ENCODE measurements at regions of chr17 and their contacts with region 1.

Region 1: GRCh38 chr17:4966844-4967538 is 626 bp downstream of the SPAG7 start:
- DNase-seq: peak; percentile 100
- ATAC-seq: peak; percentile 85
- H3K4me3 ChIP-seq: peak overlapping the region; percentile 58
- H3K27ac ChIP-seq: peak overlapping the region; percentile 87
- H3K4me1 ChIP-seq: peaks cover 14% of the 10 kb centered on the region
- H3K27me3 ChIP-seq: no peaks in the 10 kb centered on the region
- CTCF ChIP-seq: no peak
- POLR2A ChIP-seq: no peak
- RAD21 ChIP-seq: no peak

Region 2: GRCh38 chr17:4939796-4940624 is 27.0 kb before region 1 on chr17 and contains the starts of genes RNF167 and SLC25A11:
- CTCF ChIA-PET with region 1: interaction called, 3 read pairs
- POLR2A ChIA-PET with region 1: interaction called, 14 read pairs
- dilution Hi-C with region 1: no loop called
- in situ Hi-C with region 1: no loop called
- intact Hi-C with region 1: no loop called
- DNase-seq: peak; percentile 100
- ATAC-seq: peak; percentile 89
- H3K4me3 ChIP-seq: peak within 1 kb of the TSS; percentile 68
- H3K27ac ChIP-seq: peak within 1 kb of the TSS; percentile 78
- H3K4me1 ChIP-seq: peaks cover 13% of the 10 kb centered on the region
- H3K27me3 ChIP-seq: no peaks in the 10 kb centered on the region
- CTCF ChIP-seq: no peak
- POLR2A ChIP-seq: peak; percentile 71
- RAD21 ChIP-seq: no peak
- total RNA-seq, gene RNF167: 13.1 and 13.3 TPM in 2 replicates
- total RNA-seq, gene SLC25A11: 30.8 and 35.0 TPM in 2 replicates

Region 3: GRCh38 chr17:4986951-4987766 is 20.2 kb after region 1 on chr17 and contains the start of gene CAMTA2:
- CTCF ChIA-PET with region 1: interaction called, 11 read pairs
- POLR2A ChIA-PET with region 1: no interaction called
- dilution Hi-C with region 1: no loop called
- in situ Hi-C with region 1: no loop called
- intact Hi-C with region 1: no loop called
- DNase-seq: peak; percentile 56
- ATAC-seq: peak; percentile 94
- H3K4me3 ChIP-seq: peak within 1 kb of the TSS; percentile 72
- H3K27ac ChIP-seq: peak within 1 kb of the TSS; percentile 72
- H3K4me1 ChIP-seq: peaks cover 7% of the 10 kb centered on the region
- H3K27me3 ChIP-seq: no peaks in the 10 kb centered on the region
- CTCF ChIP-seq: peak; percentile 71
- POLR2A ChIP-seq: no peak
- RAD21 ChIP-seq: peak; percentile 46
- total RNA-seq, gene CAMTA2: 1.4 TPM in 2 replicates

Measured in IMR-90 (cell line).